Sigmoid colon (tissue), 7 donors: ENCODE measurements at regions of chr16 and their contacts with region 1.

Region 1: DNA sequence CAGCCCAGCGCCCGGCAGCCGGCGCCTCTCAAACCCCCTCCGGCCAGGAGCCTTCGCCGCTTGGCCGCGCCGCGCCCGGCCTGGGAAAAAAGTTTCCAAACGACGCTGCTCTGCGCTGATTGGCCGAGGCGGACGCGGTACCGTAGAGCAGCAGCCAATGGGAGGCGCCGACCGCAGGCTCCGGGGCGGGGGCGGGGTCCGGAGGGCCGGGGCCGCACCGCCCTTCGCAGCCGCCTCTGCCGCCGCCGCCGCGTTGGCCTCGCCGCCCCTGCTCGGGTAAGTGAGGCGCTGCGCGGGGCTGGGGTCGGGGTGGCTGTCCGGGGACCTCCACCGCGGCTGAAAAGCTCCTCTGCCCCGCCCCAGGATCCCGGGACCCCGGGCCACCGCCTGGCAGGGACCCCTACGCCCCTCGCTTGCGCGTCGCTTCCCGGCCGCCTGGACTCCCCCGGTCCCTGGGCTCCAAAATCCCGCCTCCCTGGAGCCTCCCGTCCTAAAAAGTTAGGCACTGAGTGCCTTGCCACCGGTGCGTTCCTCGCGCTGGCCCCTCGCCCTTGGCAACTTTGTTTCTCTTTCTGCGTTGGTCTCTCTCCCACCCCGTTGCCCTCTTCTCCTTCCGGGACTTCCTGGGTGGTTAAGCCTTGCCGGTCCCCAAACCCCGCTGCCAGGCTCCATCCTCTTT is at the start of gene NDE1:
- DNase-seq: peak; percentile 96
- H3K4me3 ChIP-seq: peak within 1 kb of the TSS; percentile 75 to 96 (median 86)
- H3K27ac ChIP-seq: peak within 1 kb of the TSS; percentile 94 to 99 (median 96)
- H3K4me1 ChIP-seq: peaks cover 0 to 52% (median 42%) of the 10 kb centered on the region in 4 donors
- H3K27me3 ChIP-seq: no peaks in the 10 kb centered on the region
- CTCF ChIP-seq: no peak
- EP300 ChIP-seq: no peak
- POLR2A ChIP-seq: peak in 1 of 2 donors; percentile 40
- total RNA-seq, gene NDE1: 27.1 to 86.1 (median 35.3) TPM

Region 2: GRCh38 chr16:15446901-15447300 is 203.3 kb before region 1 on chr16:
- intact Hi-C with region 1: no loop called
- DNase-seq: no peak
- H3K4me3 ChIP-seq: no peak overlapping the region
- H3K27ac ChIP-seq: no peak overlapping the region
- H3K4me1 ChIP-seq: peaks cover 0 to 7% (median 1%) of the 10 kb centered on the region in 4 donors
- H3K27me3 ChIP-seq: no peaks in the 10 kb centered on the region
- CTCF ChIP-seq: no peak
- EP300 ChIP-seq: no peak
- POLR2A ChIP-seq: no peak

Region 3: DNA sequence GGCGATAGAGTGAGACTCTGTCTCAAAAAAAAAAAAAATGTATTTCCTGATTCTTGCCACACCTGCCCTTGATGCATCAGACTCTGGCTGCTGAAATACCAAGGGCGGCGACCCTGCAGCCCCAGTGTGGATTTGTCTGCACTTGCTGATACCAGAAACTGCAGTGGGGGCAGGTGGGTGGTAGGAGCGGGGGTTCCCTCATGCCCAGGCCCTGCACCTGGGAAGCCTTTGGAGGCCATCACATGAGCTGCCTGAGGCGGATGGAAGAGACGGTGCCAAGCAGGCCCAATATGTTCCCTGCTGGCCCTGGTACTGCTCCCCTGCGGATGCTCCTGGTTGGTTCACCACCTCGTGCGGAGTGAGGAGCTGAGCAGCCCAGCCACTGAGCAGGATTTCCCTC is 57.8 kb before region 1 on chr16:
- intact Hi-C with region 1: no loop called
- DNase-seq: no peak
- H3K4me3 ChIP-seq: no peak overlapping the region
- H3K27ac ChIP-seq: peak overlapping the region in 2 of 4 donors; percentile 1 to 14
- H3K4me1 ChIP-seq: peaks cover 0 to 6% (median 4%) of the 10 kb centered on the region in 4 donors
- H3K27me3 ChIP-seq: no peaks in the 10 kb centered on the region
- CTCF ChIP-seq: no peak
- EP300 ChIP-seq: no peak
- POLR2A ChIP-seq: no peak

Region 4: GRCh38 chr16:15704545-15704987 is 54.4 kb after region 1 on chr16:
- intact Hi-C with region 1: loop called (anchors 2 kb)
- DNase-seq: peak; percentile 88
- H3K4me3 ChIP-seq: no peak overlapping the region
- H3K27ac ChIP-seq: peak overlapping the region; percentile 68 to 80 (median 72)
- H3K4me1 ChIP-seq: peaks cover 0 to 24% (median 16%) of the 10 kb centered on the region in 4 donors
- H3K27me3 ChIP-seq: no peaks in the 10 kb centered on the region
- CTCF ChIP-seq: peak; percentile 38 to 84 (median 74)
- EP300 ChIP-seq: no peak
- POLR2A ChIP-seq: no peak